ENCODE measurements at regions of chr6 and their contacts with region 1.

Region 1: DNA sequence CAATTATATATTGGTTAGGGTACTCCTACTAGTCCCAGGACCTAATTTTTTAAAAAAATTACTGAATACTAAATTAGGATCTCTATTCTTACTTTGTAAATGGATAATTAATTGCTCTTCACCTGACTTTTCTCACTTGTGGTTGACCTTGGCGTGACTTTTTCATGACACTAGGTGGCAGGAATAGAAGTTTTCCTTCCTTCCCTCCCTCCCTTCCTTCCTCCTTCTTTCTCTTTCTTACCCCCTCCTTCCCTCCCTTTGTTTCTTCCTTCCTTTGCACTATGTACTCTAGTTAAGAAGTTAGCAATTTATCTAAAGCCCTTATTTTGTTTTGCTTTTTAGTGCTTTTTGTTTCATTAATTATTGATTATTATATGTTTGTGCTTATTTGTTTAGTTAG is 20.4 kb upstream of the HBS1L start:
- DNase-seq: no peak
- H3K4me3 ChIP-seq: no peak overlapping the region
- H3K4me3 Mint-ChIP-seq: no peak overlapping the region
- H3K27ac ChIP-seq: no peak overlapping the region
- H3K27ac Mint-ChIP-seq: no peak overlapping the region
- H3K4me1 ChIP-seq: peaks cover 0 to 6% of the 10 kb centered on the region in 2 donors
- H3K4me1 Mint-ChIP-seq: peaks cover 9% of the 10 kb centered on the region
- H3K27me3 ChIP-seq: no peaks in the 10 kb centered on the region
- H3K27me3 Mint-ChIP-seq: peaks cover 0 to 2% (median 0%) of the 10 kb centered on the region in 3 donors
- CTCF ChIP-seq: no peak

Region 2: GRCh38 chr6:135497412-135498269 is 422.6 kb after region 1 on chr6 and contains the start of gene AHI1:
- intact Hi-C with region 1: loop called in 1 of 2 experiments (anchors 10 kb)
- DNase-seq: peak; percentile 95 to 96 (median 96)
- H3K4me3 ChIP-seq: peak within 1 kb of the TSS; percentile 67 to 98 (median 91)
- H3K4me3 Mint-ChIP-seq: no peak within 1 kb of the TSS
- H3K27ac ChIP-seq: peak within 1 kb of the TSS; percentile 79 to 97
- H3K27ac Mint-ChIP-seq: peak within 1 kb of the TSS in 3 of 7 donors; percentile 72 to 82 (median 82)
- H3K4me1 ChIP-seq: peaks cover 13% of the 10 kb centered on the region in 2 donors
- H3K4me1 Mint-ChIP-seq: peaks cover 5% of the 10 kb centered on the region
- H3K27me3 ChIP-seq: no peaks in the 10 kb centered on the region
- H3K27me3 Mint-ChIP-seq: no peaks in the 10 kb centered on the region
- CTCF ChIP-seq: no peak
- polyA plus RNA-seq, gene AHI1: 0.91 to 2.8 (median 1.4) TPM